Activated T-helper 1 cell treated with anti-CD3 and anti-CD28 coated beads, Interleukin-12 subunit alpha, Interleukin-12 subunit beta, Interleukin-2, Interleukin-4 antibody, amounts not matched to agents 30 ng/mL and 10 ng/mL and 1 ng/mL, durations not matched to agents 14 hours and 24 hours and 36 hours (primary cell): ENCODE measurements at regions of chr3 and their contacts with region 1.

Region 1: GRCh38 chr3:60017631-60018030 is 967.8 kb upstream of the CFAP20DC start:
- DNase-seq: peak; percentile 66
- H3K4me3 Mint-ChIP-seq: peak overlapping the region; percentile 74
- H3K27ac Mint-ChIP-seq: peak overlapping the region; percentile 96
- H3K4me1 Mint-ChIP-seq: peaks cover 67% of the 10 kb centered on the region
- H3K27me3 Mint-ChIP-seq: peaks cover 2% of the 10 kb centered on the region

Region 2: DNA sequence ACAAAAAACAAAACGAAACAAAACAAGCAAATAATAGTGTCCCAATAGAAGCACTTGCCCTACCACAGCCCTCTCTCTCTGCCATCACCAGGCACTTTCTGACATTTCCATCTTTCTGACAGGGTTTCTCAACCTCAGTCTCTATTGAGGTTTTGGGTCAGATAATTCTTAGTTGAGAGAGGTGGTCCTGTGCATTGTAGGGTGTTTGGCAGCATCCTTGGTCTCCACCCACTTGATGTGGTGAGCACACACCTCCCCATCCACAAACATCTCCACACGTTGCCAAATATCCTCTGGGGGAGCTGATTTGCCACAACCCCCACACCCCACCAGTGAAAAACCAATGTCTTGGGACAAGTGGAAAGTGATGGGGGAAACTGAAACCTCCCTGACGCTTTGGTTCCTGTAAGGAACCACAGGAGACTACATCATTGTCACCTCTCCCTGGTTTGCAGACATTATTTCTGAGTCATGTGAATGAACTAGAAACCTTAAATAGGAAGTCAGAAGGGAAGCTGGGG is 234.1 kb before region 1 on chr3:
- intact Hi-C with region 1: loop called (anchors 1 kb)
- DNase-seq: peak; percentile 31
- H3K4me3 Mint-ChIP-seq: peak overlapping the region; percentile 40
- H3K27ac Mint-ChIP-seq: peak overlapping the region; percentile 91
- H3K4me1 Mint-ChIP-seq: peaks cover 41% of the 10 kb centered on the region
- H3K27me3 Mint-ChIP-seq: no peaks in the 10 kb centered on the region

Region 3: GRCh38 chr3:59978979-59979378 is 38.7 kb before region 1 on chr3:
- intact Hi-C with region 1: loop called (anchors 1 kb)
- DNase-seq: peak; percentile 38
- H3K4me3 Mint-ChIP-seq: peak overlapping the region; percentile 64
- H3K27ac Mint-ChIP-seq: peak overlapping the region; percentile 93
- H3K4me1 Mint-ChIP-seq: peaks cover 45% of the 10 kb centered on the region
- H3K27me3 Mint-ChIP-seq: no peaks in the 10 kb centered on the region

Region 4: DNA sequence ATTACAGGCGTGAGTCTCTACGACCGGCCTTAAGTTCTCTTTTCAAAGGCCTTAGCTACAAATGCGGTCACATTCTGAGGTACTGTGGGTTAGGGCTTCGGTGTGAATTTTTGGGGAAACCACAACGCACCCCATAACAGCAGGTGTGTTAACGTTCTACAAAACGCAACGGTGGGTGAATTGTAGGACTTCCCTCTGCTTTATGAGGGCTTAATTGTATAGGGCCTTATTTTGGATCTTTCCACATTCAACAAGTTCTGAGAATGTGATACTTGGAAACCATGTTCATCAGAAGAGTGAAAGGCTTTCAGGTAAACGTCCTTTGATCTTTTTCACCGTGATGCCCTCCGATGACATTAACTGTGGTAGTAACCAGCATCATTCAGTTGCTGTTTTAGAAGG is 30.8 kb after region 1 on chr3:
- intact Hi-C with region 1: loop called (anchors 1 kb)
- DNase-seq: peak; percentile 62
- H3K4me3 Mint-ChIP-seq: peak overlapping the region; percentile 74
- H3K27ac Mint-ChIP-seq: peak overlapping the region; percentile 93
- H3K4me1 Mint-ChIP-seq: peaks cover 88% of the 10 kb centered on the region
- H3K27me3 Mint-ChIP-seq: no peaks in the 10 kb centered on the region

Region 5: DNA sequence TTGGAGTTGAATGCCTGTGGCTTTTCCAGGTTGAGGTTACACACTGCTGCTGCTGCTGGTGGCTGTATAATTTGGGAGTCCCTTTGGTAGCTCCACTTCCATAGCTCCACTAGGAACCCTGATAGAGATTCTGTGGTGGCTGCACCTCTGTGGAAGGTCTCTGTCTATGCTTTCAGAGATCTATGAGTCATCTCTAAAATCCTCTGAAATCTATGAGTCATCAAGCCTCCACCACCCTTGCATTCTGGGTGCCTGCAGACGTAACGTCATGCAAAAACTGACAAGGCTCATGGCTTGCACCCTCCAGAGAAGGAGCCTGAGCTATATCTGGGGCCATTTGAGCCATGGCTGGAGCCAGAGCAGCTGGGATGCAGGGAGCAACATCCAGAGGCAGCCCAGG is 69.2 kb after region 1 on chr3:
- intact Hi-C with region 1: loop called (anchors 1 kb)
- DNase-seq: peak; percentile 54
- H3K4me3 Mint-ChIP-seq: peak overlapping the region; percentile 53
- H3K27ac Mint-ChIP-seq: peak overlapping the region; percentile 96
- H3K4me1 Mint-ChIP-seq: peaks cover 69% of the 10 kb centered on the region
- H3K27me3 Mint-ChIP-seq: no peaks in the 10 kb centered on the region